Esophagus squamous epithelium (tissue), 5 donors: ENCODE measurements at regions of chr12 and their contacts with region 1.

Region 1: GRCh38 chr12:11486623-11487444 is 91.5 kb upstream of the PRB2 start:
- DNase-seq: peak; percentile 9
- H3K4me3 ChIP-seq: no peak overlapping the region
- H3K27ac ChIP-seq: no peak overlapping the region
- H3K4me1 ChIP-seq: peaks cover 0 to 4% (median 0%) of the 10 kb centered on the region in 3 donors
- H3K27me3 ChIP-seq: peaks cover 0 to 15% (median 0%) of the 10 kb centered on the region in 4 donors
- CTCF ChIP-seq: peak; percentile 90 to 97 (median 94)
- POLR2A ChIP-seq: no peak

Region 2: DNA sequence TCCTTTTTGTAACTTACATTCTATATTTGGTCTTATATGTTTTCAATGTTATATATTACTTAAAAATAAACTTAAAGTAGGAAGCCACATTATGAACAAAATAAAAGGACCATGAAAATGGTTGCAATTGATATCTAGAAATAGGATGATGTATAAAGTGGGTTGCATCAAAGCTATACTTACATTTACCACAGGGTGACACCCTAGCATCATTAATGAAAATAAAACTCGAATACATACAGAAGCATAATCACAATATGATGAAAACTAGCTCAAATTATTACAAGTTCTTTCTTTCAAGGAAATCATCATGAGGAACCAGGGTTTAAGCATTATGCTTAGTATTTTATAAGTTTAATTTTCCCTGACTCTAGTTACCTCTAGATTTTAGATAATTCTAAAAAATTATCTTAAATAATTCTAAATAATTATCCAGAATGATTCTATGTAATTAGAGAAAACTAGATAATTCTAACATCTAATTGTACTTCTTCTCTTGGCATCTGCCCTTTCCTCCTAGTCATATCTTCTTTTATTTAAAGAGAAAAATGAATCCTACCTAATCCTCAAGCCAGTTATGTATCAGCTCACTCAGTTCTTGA is 715.6 kb before region 1 on chr12:
- intact Hi-C with region 1: loop called (anchors 10 kb)
- DNase-seq: no peak
- H3K4me3 ChIP-seq: no peak overlapping the region
- H3K27ac ChIP-seq: no peak overlapping the region
- H3K4me1 ChIP-seq: no peaks in the 10 kb centered on the region
- H3K27me3 ChIP-seq: peaks cover 0 to 46% (median 0%) of the 10 kb centered on the region in 4 donors
- CTCF ChIP-seq: peak; percentile 15 to 87 (median 62)
- POLR2A ChIP-seq: no peak

Region 3: DNA sequence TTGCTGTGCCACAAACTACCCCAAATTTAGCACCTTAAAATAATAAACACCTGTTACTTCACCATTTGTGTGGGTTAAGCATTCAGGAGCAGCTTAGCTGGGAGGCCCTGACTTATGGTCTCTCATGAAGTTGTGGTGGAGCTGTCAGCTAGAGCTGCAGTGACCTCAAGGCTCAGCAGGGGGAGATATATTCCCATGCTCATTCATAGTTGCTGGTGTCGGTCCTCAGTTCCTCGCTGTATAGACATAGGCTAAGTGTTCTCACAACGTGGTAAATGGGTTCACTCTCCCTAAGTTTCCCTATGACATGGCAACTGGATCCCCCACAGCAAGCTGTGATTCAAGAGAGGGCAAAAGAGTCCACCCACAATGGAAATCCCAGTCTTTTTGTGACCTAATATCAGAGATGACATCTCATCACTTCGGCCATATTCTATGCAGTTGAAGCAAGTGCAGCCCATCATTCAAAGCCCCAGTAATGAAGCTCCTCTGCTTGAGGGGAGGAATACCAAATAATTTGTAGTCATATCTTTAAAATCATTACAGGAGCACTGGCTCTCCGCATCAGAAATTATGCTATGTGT is 258.4 kb before region 1 on chr12:
- intact Hi-C with region 1: loop called (anchors 5 kb)
- DNase-seq: no peak
- H3K4me3 ChIP-seq: no peak overlapping the region
- H3K27ac ChIP-seq: no peak overlapping the region
- H3K4me1 ChIP-seq: no peaks in the 10 kb centered on the region
- H3K27me3 ChIP-seq: no peaks in the 10 kb centered on the region
- CTCF ChIP-seq: peak in 4 of 6 experiments; percentile 29 to 66 (median 40)
- POLR2A ChIP-seq: no peak